H1 (cell line): ENCODE measurements at regions of chr16 and their contacts with region 1.

Region 1: DNA sequence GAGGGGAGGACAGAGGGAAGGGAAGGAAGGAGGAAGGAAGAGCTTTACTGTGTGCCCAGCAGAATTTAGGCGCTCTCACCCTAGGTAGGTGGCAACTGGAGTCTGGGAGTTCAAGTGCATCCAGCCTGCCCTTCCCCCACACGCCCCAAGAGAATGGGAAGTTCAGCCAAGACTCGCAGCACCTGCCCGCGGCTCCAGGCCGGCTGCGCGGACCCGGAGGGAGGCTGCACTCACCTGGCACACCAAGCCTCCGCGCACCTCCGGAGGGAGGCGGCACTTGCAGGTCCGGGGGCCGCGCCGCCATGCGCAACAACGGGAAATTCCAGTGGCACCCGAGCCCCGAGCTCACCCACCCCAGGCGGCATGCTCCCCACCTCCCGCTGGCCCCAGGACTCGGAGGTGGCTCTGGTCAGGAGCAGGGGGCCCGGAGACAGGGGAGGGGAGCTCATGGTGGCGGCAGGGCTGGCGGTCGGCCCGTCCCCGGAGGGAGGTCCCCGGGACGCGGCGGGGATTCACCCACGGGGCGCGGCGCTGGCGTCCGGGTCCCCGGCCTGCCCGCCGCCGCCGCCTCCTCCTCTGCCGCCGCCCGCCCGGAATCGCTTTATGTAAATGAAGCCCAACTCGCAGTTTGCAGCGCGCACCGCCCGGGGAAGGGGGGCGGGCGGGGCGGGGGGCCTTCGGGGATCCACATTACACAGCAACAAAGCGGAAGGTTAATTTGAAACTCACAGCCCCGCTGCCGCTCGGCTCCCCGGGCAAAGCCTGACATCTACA is at the start of gene ZFHX3:
- DNase-seq: peak in 1 of 2 experiments; percentile 84
- H3K4me3 ChIP-seq: peak within 1 kb of the TSS; percentile 38 to 66 (median 46)
- H3K27ac ChIP-seq: no peak within 1 kb of the TSS
- H3K4me1 ChIP-seq: peaks cover 15 to 35% (median 29%) of the 10 kb centered on the region in 4 experiments
- H3K27me3 ChIP-seq: peaks cover 69 to 98% (median 95%) of the 10 kb centered on the region in 4 experiments
- CTCF ChIP-seq: no peak; a peak in 1 of 4 replicates
- EP300 ChIP-seq: no peak
- POLR2A ChIP-seq: no peak
- RAD21 ChIP-seq: peak; percentile 31 to 47; a peak in 3 of 4 replicates
- total RNA-seq, gene ZFHX3: 0.90 and 0.99 TPM in 2 replicates

Region 2: DNA sequence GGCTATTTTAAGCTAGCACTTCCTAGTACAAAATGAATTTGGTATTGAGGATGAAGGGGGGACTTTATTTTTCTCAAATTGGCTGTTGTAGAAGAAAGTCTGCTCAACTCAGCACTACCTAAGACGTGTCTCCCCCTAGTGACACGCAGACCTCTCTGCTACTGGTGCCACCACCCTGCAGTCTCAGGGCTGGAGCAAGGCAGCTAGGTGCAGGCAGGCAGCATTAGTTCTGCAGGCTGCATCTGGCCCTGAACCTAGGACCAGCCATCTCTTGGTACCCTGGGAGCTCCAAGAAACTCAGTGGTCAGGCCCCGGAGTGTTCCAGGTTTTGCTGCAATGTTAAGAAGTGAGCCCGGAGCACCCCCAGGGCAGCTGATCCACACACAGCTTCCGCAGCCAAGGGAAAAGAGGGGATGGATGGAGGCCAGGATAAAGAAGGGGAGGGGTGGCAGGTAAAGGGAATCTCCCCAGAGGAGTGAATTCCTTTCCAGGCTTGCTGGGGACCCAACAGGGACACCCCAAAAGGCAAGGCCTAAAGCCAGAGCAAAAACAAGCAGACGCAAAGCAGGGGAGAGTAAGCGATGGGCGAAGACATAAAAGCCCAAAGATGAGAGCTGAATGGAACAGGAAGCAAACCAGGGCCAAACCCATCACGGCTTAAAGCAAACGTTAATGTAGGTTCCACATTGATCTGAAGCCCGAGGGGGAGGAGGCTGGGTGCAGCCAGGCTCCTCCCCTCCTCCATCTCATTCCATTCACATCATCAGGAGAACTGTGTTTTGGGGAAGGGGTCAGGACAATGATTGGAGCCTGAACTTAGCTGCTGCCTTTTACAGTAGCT is 200.3 kb before region 1 on chr16:
- CTCF ChIA-PET with region 1: no interaction called
- POLR2A ChIA-PET with region 1: no interaction called
- DNase-seq: no peak
- H3K4me3 ChIP-seq: no peak overlapping the region
- H3K27ac ChIP-seq: no peak overlapping the region
- H3K4me1 ChIP-seq: peaks cover 0 to 9% (median 3%) of the 10 kb centered on the region in 4 experiments; a peak in 3 of 7 replicates
- H3K27me3 ChIP-seq: no peaks in the 10 kb centered on the region
- CTCF ChIP-seq: peak; percentile 77 to 88 (median 82)
- EP300 ChIP-seq: no peak
- POLR2A ChIP-seq: no peak
- RAD21 ChIP-seq: peak; percentile 78

Region 3: DNA sequence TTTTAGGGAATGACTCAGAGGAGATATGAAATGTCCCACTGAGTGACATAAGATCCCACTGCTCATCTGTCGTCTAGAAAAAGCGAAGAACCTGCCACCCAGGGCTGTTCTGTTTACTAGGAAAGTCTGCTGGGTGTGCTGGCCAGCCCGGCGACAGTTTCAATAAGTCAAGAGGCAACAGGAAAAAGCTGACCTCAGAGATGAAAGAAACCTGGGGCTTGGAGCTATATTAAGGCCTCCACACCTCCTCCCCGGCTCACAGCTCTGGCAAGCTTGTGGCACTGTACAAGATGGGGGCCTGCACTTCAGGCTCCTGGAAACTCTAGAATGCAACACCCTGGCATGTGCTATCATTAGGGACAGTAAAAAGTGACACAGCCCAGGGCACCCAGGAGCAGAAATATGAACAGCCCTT is 10.4 kb before region 1 on chr16:
- CTCF ChIA-PET with region 1: interaction called, 24 read pairs
- POLR2A ChIA-PET with region 1: interaction called, 10 read pairs
- DNase-seq: no peak
- H3K4me3 ChIP-seq: peak overlapping the region in 1 of 4 experiments; percentile 49; a peak in 1 of 8 replicates
- H3K27ac ChIP-seq: no peak overlapping the region
- H3K4me1 ChIP-seq: peaks cover 35 to 50% (median 43%) of the 10 kb centered on the region in 4 experiments
- H3K27me3 ChIP-seq: peaks cover 56 to 82% (median 81%) of the 10 kb centered on the region in 4 experiments
- CTCF ChIP-seq: no peak
- EP300 ChIP-seq: no peak
- POLR2A ChIP-seq: no peak
- RAD21 ChIP-seq: no peak

Region 4: DNA sequence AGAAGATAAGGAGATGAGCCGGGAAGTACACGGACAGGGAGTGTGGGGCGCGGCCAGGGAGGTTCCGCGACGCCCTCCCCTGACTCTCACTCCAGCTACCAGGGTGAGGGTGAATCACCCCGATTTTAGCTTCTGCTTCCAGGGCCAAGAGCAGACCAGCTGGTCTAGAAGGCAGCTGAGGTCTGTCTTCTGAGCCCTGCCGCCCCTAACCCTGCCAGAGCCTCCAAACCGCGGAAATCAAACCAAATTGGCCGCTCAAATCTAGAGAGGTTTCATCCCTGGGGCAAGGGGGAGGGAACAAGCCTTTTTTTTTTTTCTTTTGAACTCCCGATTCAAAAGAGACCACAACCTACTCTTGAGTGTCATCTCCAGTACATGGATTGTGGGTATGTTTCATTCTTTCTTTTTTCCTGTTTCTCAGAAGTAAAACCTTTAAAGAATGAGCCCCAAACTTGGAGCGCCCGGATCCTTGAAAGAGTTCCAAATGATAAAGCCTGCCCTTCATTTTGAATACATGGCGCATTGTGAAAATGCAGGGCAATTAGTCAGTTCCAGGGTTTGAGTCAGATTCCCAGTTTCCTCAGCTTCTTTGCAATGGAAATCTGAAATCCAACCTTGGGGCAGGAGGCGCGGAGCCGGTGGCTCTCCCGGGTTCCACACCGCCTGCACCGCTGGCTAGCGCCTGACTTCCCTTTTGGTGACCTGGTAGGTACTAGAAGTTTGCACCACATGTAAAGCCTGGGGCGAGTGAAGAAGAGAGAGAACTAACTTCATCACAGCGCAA is 16.7 kb after region 1 on chr16:
- CTCF ChIA-PET with region 1: interaction called, 12 read pairs
- POLR2A ChIA-PET with region 1: interaction called, 14 read pairs
- DNase-seq: peak in 1 of 2 experiments; percentile 50
- H3K4me3 ChIP-seq: peak overlapping the region in 1 of 4 experiments; percentile 9; a peak in 2 of 8 replicates
- H3K27ac ChIP-seq: no peak overlapping the region
- H3K4me1 ChIP-seq: peaks cover 18 to 50% (median 25%) of the 10 kb centered on the region in 4 experiments
- H3K27me3 ChIP-seq: peaks cover 70 to 100% (median 91%) of the 10 kb centered on the region in 4 experiments
- CTCF ChIP-seq: no peak
- EP300 ChIP-seq: no peak
- POLR2A ChIP-seq: no peak
- RAD21 ChIP-seq: no peak

Region 5: DNA sequence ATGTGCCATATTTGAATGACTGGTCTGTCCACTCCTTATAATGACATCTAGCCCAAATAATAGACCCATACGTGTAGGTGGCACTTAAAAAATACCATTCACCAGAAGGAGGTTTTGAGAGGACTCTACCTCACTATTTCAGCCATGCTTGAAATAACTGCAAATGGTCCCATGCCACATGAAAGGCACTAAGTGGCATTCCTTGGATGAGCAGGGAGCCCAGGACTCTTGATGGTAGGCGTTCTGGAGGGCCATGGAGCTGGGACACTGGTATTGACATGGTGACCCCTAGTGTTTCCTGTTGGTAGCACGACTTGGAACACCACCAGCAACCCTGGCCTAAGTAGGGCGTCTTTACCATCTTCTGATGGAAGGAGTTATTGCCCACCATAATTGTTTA is 149.0 kb after region 1 on chr16:
- CTCF ChIA-PET with region 1: interaction called, 10 read pairs
- POLR2A ChIA-PET with region 1: no interaction called
- DNase-seq: peak; percentile 51 to 74
- H3K4me3 ChIP-seq: no peak overlapping the region
- H3K27ac ChIP-seq: no peak overlapping the region
- H3K4me1 ChIP-seq: no peaks in the 10 kb centered on the region; a peak in 1 of 7 replicates
- H3K27me3 ChIP-seq: peaks cover 0 to 6% (median 0%) of the 10 kb centered on the region in 4 experiments; a peak in 2 of 7 replicates
- CTCF ChIP-seq: peak; percentile 79 to 92 (median 84)
- EP300 ChIP-seq: no peak
- POLR2A ChIP-seq: no peak
- RAD21 ChIP-seq: peak; percentile 95 to 97